AG04450 (cell line): ENCODE measurements at regions of chr1 and their contacts with region 1.

Region 1: GRCh38 chr1:178310685-178311105 is 186.1 kb downstream of the CLEC20A start:
- DNase-seq: peak; percentile 21
- H3K4me3 ChIP-seq: no peak overlapping the region
- H3K27ac ChIP-seq: no peak overlapping the region
- H3K27me3 ChIP-seq: no peaks in the 10 kb centered on the region
- CTCF ChIP-seq: peak; percentile 75

Region 2: DNA sequence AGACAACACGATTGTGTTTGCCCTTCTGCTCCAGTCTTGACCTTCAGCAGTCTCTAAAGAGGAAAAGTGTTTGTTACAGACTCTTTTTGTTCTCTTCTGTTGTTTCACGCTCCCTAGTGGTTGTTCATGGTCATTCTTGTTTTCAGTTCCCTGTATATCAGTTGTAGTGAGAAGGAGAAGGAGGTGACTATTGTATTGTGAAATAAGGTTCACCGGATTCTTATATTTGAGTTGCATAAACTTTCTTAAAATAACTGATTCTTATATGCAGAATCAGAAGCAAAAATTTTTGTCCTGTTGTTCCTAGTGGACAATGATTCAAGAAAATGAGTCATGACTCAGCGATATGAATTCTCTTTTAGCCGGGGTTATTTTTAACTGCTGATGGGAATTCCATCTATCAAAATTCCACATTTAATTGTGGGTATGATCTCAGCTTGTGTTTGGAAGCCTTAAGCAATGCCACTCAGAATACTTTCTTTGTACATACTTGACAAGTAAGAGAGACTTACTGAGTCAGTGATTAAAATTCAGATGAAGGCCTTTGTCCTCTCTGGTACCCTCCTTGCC is 33.9 kb after region 1 on chr1:
- CTCF ChIA-PET with region 1: interaction called, 21 read pairs
- POLR2A ChIA-PET with region 1: no interaction called
- DNase-seq: peak; percentile 55
- H3K4me3 ChIP-seq: no peak overlapping the region
- H3K27ac ChIP-seq: no peak overlapping the region
- H3K27me3 ChIP-seq: no peaks in the 10 kb centered on the region
- CTCF ChIP-seq: peak; percentile 71

Region 3: DNA sequence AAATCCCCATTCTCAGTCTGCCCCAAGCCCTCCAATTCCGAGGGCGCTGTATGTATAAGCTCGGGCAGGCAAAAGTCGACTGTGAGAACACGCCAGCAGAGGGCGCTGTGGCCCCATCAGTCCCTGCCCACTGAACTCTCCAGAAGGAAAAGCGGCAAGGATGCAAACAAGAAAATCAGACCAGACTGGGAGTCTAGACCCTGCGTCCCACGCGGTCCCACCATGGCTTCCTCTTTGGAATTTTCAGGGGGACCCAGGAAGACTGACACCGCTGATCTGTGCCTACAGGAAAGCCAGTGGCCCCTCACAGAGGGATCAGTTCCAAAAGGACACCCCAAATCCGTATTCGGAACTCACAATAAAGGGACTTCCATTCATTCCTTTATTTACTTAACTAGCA is 221.7 kb after region 1 on chr1:
- CTCF ChIA-PET with region 1: interaction called, 65 read pairs
- POLR2A ChIA-PET with region 1: no interaction called
- DNase-seq: peak; percentile 63
- H3K4me3 ChIP-seq: no peak overlapping the region
- H3K27ac ChIP-seq: no peak overlapping the region
- H3K27me3 ChIP-seq: no peaks in the 10 kb centered on the region
- CTCF ChIP-seq: peak; percentile 90